ENCODE measurements at regions of chr1 and their contacts with region 1.

Region 1: GRCh38 chr1:77832901-77833300 is 53.5 kb downstream of the MIGA1 start:
- DNase-seq: no peak
- ATAC-seq: peak; percentile 87

Region 2: GRCh38 chr1:77888081-77888780 is 55.3 kb after region 1 on chr1 and contains the start of gene NEXN:
- intact Hi-C with region 1: loop called (anchors 5 kb)
- DNase-seq: peak; percentile 94
- ATAC-seq: peak; percentile 91
- total RNA-seq, gene NEXN: 365 TPM